Aorta (tissue), 5 donors: ENCODE measurements at regions of chr20 and their contacts with region 1.

Region 1: GRCh38 chr20:34058831-34059230 is 53.2 kb downstream of the EIF2S2 start:
- DNase-seq: no peak
- ATAC-seq: no peak
- H3K4me3 ChIP-seq: no peak overlapping the region
- H3K27ac ChIP-seq: no peak overlapping the region
- H3K4me1 ChIP-seq: peaks cover 0 to 7% of the 10 kb centered on the region in 2 donors
- H3K27me3 ChIP-seq: no peaks in the 10 kb centered on the region

Region 2: DNA sequence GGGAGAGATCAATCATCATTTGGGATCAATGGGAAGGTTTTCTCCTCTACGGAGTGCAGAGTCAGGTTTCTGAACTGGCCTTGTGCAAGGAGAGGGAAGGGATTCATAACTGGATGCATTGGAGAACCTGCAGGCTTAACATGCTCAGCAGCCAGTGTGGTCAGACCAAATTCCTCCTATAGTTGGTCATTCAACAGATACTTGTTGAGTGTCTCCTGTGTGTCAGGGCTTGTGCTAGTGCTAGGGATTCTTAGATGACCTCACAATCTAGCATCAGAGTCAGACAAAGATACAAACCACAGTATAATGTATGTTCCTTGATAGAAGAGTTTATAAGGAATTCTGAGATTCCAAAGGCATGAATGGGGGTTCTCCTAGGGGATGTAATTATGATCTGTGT is 41.2 kb before region 1 on chr20:
- intact Hi-C with region 1: loop called in 1 of 2 experiments (anchors 5 kb)
- DNase-seq: no peak
- ATAC-seq: no peak
- H3K4me3 ChIP-seq: no peak overlapping the region
- H3K27ac ChIP-seq: no peak overlapping the region
- H3K4me1 ChIP-seq: peaks cover 21 to 32% of the 10 kb centered on the region in 2 donors
- H3K27me3 ChIP-seq: no peaks in the 10 kb centered on the region

Region 3: GRCh38 chr20:34111702-34112599 is 53.1 kb after region 1 on chr20 and contains the start of gene EIF2S2:
- intact Hi-C with region 1: no loop called
- DNase-seq: peak; percentile 97 to 98
- ATAC-seq: peak; percentile 98
- H3K4me3 ChIP-seq: peak within 1 kb of the TSS; percentile 78 to 95
- H3K27ac ChIP-seq: peak within 1 kb of the TSS; percentile 14 to 77
- H3K4me1 ChIP-seq: peaks cover 5 to 6% of the 10 kb centered on the region in 2 donors
- H3K27me3 ChIP-seq: no peaks in the 10 kb centered on the region
- total RNA-seq, gene EIF2S2: 37.1 to 46.2 TPM